ENCODE measurements at regions of chr3 and their contacts with region 1.

Region 1: GRCh38 chr3:185270262-185270955 is 16.6 kb upstream of the EHHADH start:
- DNase-seq: peak in 1 of 2 experiments; percentile 55
- H3K4me3 ChIP-seq: no peak overlapping the region
- H3K27ac ChIP-seq: no peak overlapping the region
- H3K4me1 ChIP-seq: no peaks in the 10 kb centered on the region
- H3K27me3 ChIP-seq: no peaks in the 10 kb centered on the region
- CTCF ChIP-seq: peak; percentile 78 to 84 (median 81)
- EP300 ChIP-seq: no peak
- POLR2A ChIP-seq: no peak
- RAD21 ChIP-seq: peak; percentile 80 to 82

Region 2: DNA sequence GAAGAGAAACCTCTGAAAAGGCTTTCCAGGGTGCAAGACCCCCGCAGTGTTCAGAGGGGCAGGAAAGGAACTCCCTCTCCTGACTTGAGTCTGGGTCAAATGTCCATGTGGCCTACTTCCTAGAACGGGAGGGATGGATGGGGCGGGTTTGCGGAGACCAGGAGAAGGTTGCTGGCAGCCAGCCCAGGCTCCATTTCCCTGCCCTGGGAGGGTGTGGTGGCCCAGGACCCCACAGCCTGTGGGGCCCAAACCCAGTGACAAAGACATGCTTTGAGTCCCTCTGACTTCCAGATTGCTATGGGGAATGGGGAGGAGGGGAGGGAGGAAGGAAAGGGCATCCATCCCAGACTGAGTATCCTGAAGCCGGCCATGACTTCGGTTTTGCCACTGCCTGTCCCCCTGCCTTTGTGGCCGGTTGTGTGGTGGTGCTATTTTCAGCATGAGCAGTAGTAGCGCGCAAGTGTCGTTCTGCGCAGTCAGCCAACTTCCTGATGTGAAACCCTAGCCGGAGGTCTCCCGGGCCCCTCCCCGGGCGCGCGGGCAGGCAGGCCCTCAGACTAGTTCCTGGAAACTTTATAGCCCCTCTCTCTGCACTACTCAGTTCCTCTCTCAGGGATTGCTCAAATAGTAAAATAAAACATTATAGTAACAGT is 582.9 kb before region 1 on chr3:
- CTCF ChIA-PET with region 1: no interaction called
- POLR2A ChIA-PET with region 1: no interaction called
- DNase-seq: no peak
- H3K4me3 ChIP-seq: no peak overlapping the region
- H3K27ac ChIP-seq: no peak overlapping the region
- H3K4me1 ChIP-seq: peaks cover 0 to 10% (median under 1%) of the 10 kb centered on the region in 4 experiments; a peak in 4 of 7 replicates
- H3K27me3 ChIP-seq: peaks cover 0 to 4% (median 2%) of the 10 kb centered on the region in 4 experiments; a peak in 2 of 7 replicates
- CTCF ChIP-seq: no peak
- EP300 ChIP-seq: no peak
- POLR2A ChIP-seq: no peak
- RAD21 ChIP-seq: no peak

Region 3: DNA sequence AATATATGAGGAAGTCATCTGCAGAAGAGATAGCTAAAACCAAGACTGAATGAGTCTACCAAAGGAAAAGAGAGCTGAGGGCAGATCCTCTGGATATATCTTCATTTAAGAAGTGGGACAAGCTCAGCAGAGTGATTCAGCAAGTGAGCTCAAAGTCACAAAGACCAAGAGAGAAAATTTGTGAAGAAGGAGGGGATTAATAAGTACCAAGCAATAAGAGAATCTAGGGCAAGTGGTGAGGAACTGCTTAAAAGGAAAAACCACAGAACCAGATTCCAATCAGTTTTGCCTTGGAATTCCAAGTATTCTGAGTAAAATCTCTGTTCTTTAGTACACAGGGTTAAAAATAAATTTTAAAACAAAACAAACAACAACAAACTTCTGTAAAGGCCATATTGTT is 20.2 kb before region 1 on chr3:
- CTCF ChIA-PET with region 1: interaction called, 10 read pairs
- POLR2A ChIA-PET with region 1: no interaction called
- DNase-seq: no peak
- H3K4me3 ChIP-seq: no peak overlapping the region
- H3K27ac ChIP-seq: no peak overlapping the region
- H3K4me1 ChIP-seq: peaks cover 0 to 3% (median 2%) of the 10 kb centered on the region in 4 experiments; a peak in 2 of 7 replicates
- H3K27me3 ChIP-seq: no peaks in the 10 kb centered on the region
- CTCF ChIP-seq: no peak
- EP300 ChIP-seq: no peak
- POLR2A ChIP-seq: no peak
- RAD21 ChIP-seq: no peak

Region 4: GRCh38 chr3:185280572-185281365 is 10.4 kb after region 1 on chr3:
- CTCF ChIA-PET with region 1: interaction called, 26 read pairs
- POLR2A ChIA-PET with region 1: no interaction called
- DNase-seq: no peak
- H3K4me3 ChIP-seq: no peak overlapping the region
- H3K27ac ChIP-seq: no peak overlapping the region
- H3K4me1 ChIP-seq: peaks cover 0 to 3% (median 0%) of the 10 kb centered on the region in 4 experiments; a peak in 2 of 7 replicates
- H3K27me3 ChIP-seq: no peaks in the 10 kb centered on the region
- CTCF ChIP-seq: peak in 2 of 3 experiments; percentile 36 to 71; a peak in 2 of 4 replicates
- EP300 ChIP-seq: no peak
- POLR2A ChIP-seq: no peak
- RAD21 ChIP-seq: peak; percentile 27 to 40; a peak in 3 of 4 replicates